IMR-90 (cell line): ENCODE measurements at regions of chr6 and their contacts with region 1.

Region 1: DNA sequence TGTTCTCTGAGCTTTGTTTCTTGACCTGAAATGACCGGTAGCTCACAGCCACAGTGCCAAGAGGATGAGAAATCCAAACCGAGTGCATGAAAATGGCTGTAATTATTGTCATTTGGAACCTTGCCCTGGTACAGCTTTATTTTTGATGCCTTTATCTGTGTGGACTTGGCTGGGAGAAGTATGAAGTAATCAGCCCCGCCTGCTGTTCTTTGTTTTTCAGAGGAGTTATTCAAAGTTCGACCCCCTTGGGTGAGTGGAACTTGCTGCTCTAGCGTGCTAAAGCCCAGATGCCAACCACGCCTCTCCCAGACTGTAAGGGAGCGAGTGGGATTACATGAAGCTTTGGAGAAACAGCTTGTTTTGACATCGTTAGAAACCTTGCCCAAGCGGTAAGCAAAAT is 48.3 kb downstream of the ECT2L start:
- DNase-seq: peak; percentile 16
- ATAC-seq: peak; percentile 49
- H3K4me3 ChIP-seq: no peak overlapping the region
- H3K27ac ChIP-seq: no peak overlapping the region
- H3K4me1 ChIP-seq: no peaks in the 10 kb centered on the region; the same call in 1 of the 2 replicates
- H3K27me3 ChIP-seq: no peaks in the 10 kb centered on the region
- CTCF ChIP-seq: no peak
- POLR2A ChIP-seq: no peak
- RAD21 ChIP-seq: no peak

Region 2: DNA sequence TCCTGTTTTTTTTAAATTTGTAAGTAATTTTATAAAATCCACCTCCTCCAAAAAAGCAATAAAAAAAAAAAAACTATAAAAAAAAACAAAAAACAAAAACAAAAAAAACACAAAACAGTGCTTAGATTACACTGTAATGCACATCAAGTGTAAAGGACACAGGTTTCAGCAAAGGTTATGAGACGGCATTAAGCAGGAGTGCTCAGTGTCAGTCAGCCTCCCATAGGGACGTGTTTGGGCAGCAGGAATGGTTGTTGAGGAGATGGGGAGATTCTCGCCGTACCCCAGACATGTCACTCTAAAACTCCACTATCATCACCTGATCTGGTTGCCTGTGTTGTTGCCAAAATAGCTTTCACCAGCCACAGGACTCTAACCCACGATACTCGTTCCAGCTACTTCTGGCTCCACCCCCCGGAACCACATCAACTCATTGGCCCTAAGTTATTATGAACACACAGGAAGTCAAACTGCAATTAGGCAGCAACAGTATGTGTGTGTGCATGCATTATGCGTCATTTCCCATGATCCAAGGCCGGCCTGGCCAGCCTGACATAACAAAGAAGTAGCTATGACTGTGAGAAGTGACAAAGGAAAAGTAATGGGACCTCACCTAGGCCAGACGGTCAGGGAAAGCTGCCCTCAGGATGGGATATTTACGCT is 19.6 kb before region 1 on chr6:
- CTCF ChIA-PET with region 1: interaction called, 4 read pairs
- POLR2A ChIA-PET with region 1: interaction called, 11 read pairs
- dilution Hi-C with region 1: no loop called
- in situ Hi-C with region 1: no loop called
- intact Hi-C with region 1: no loop called
- DNase-seq: peak; percentile 9
- ATAC-seq: no peak
- H3K4me3 ChIP-seq: no peak overlapping the region
- H3K27ac ChIP-seq: no peak overlapping the region
- H3K4me1 ChIP-seq: no peaks in the 10 kb centered on the region
- H3K27me3 ChIP-seq: no peaks in the 10 kb centered on the region
- CTCF ChIP-seq: no peak
- POLR2A ChIP-seq: no peak
- RAD21 ChIP-seq: no peak

Region 3: GRCh38 chr6:139533573-139534471 is 689.6 kb after region 1 on chr6:
- CTCF ChIA-PET with region 1: no interaction called
- POLR2A ChIA-PET with region 1: no interaction called
- dilution Hi-C with region 1: no loop called
- in situ Hi-C with region 1: no loop called
- intact Hi-C with region 1: no loop called
- DNase-seq: peak; percentile 83
- ATAC-seq: peak; percentile 89
- H3K4me3 ChIP-seq: no peak overlapping the region
- H3K27ac ChIP-seq: peak overlapping the region; percentile 88
- H3K4me1 ChIP-seq: peaks cover 14% of the 10 kb centered on the region
- H3K27me3 ChIP-seq: no peaks in the 10 kb centered on the region
- CTCF ChIP-seq: no peak
- POLR2A ChIP-seq: no peak
- RAD21 ChIP-seq: no peak